MCF 10A (cell line): ENCODE measurements at regions of chr11 and their contacts with region 1.

Region 1: GRCh38 chr11:119101759-119102423 is at the start of gene DPAGT1:
- DNase-seq: peak; percentile 99
- H3K4me3 Mint-ChIP-seq: peak within 1 kb of the TSS; percentile 78
- H3K27ac Mint-ChIP-seq: peak within 1 kb of the TSS; percentile 99
- H3K4me1 Mint-ChIP-seq: peaks cover 16% of the 10 kb centered on the region
- H3K27me3 Mint-ChIP-seq: no peaks in the 10 kb centered on the region
- CTCF ChIP-seq: no peak
- total RNA-seq, gene DPAGT1: 55.6 and 58.8 TPM in 2 replicates

Region 2: GRCh38 chr11:118988280-118988679 is 113.6 kb before region 1 on chr11:
- CTCF ChIA-PET with region 1: no interaction called
- POLR2A ChIA-PET with region 1: no interaction called
- intact Hi-C with region 1: no loop called
- DNase-seq: peak; percentile 89
- H3K4me3 Mint-ChIP-seq: peak overlapping the region; percentile 60
- H3K27ac Mint-ChIP-seq: peak overlapping the region; percentile 53
- H3K4me1 Mint-ChIP-seq: peaks cover 11% of the 10 kb centered on the region
- H3K27me3 Mint-ChIP-seq: no peaks in the 10 kb centered on the region
- CTCF ChIP-seq: no peak

Region 3: DNA sequence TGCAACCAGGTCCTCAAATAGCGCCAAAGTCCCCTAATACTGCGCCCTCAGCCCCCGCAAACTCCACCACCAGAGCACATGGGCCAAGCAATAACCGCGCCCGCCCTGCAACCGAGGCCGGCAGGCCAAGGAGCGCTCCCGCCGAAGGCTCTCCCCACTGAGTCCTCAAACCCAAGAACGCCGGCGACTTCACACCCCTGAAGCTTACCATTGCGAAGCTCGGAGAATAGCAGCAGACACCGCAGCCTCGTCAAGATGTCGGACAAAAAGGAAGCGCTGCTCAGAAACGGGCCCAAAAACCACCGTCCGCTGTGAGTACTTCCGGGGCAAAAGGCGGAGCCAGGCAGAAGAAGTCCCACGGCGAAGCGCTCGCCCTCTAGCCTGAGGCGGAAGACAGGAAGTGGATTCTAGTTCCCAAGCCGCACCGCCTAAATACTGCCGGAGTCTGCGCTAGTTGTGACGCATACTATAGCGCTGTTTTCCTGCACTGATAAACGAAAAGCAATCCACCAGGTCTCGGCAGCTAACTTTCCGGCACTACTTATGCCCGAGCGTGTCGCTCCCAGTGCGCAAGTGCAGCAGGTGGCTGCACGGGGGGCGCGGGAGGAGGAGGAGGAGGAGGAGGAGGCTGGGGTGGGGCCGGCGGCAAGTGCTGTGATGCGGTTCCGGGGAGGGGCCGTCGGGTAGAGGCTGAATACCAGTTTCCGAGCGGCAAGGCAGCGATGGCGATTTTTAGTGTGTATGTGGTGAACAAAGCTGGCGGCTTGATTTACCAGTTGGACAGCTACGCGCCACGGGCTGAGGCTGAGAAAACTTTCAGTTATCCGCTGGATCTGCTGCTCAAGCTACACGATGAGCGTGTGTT is 83.6 kb before region 1 on chr11 and contains the starts of genes RPS25 and TRAPPC4:
- CTCF ChIA-PET with region 1: interaction called, 3 read pairs
- POLR2A ChIA-PET with region 1: interaction called, 22 read pairs
- intact Hi-C with region 1: loop called (anchors 2 kb)
- DNase-seq: peak; percentile 97
- H3K4me3 Mint-ChIP-seq: peak within 1 kb of the TSS; percentile 94
- H3K27ac Mint-ChIP-seq: peak within 1 kb of the TSS; percentile 98
- H3K4me1 Mint-ChIP-seq: peaks cover 22% of the 10 kb centered on the region
- H3K27me3 Mint-ChIP-seq: no peaks in the 10 kb centered on the region
- CTCF ChIP-seq: no peak
- total RNA-seq, gene RPS25: 1,252 and 1,255 TPM in 2 replicates
- total RNA-seq, gene TRAPPC4: 78.6 and 96.5 TPM in 2 replicates

Region 4: DNA sequence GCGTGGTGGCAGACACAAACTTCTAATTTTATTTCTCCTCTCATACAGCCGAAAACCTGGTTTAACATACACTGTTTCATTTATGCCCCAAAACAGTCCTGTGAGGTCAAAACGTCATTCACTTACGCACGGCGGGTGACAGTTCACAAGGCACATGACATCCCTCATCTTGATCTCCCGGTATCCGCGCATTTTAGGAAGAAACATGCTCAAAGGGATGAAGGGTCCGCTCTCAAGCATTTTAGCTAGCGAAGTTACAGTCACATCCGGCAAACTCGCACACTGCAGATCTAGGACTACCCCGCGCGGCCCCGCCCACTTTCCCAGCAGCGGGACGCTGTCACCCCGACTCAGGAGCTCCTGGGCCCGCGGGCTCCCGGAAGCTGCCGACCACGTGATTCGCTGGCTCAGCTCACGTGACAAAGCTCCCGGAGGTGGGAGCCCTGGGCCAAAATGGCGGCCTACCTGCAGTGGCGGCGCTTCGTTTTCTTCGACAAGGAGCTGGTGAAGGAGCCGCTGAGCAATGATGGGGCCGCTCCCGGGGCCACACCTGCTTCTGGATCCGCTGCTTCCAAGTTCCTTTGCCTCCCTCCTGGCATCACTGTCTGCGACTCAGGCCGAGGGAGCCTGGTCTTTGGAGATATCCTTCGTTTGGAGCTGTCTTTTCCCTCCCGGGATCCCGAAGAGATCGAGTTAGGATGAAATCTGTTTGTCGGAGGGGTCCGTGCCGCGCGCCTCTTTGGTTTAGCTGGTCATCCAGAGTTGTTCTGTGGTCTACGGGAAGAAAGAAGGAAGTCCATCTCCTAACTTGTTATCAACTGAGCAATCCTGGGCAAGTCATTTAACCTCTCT is 34.3 kb before region 1 on chr11 and contains the start of gene VPS11:
- CTCF ChIA-PET with region 1: no interaction called
- POLR2A ChIA-PET with region 1: interaction called, 35 read pairs
- intact Hi-C with region 1: loop called (anchors 2 kb)
- DNase-seq: peak; percentile 95
- H3K4me3 Mint-ChIP-seq: peak within 1 kb of the TSS; percentile 87
- H3K27ac Mint-ChIP-seq: peak within 1 kb of the TSS; percentile 76
- H3K4me1 Mint-ChIP-seq: peaks cover 7% of the 10 kb centered on the region
- H3K27me3 Mint-ChIP-seq: no peaks in the 10 kb centered on the region
- CTCF ChIP-seq: no peak
- total RNA-seq, gene VPS11: 16.2 and 21.8 TPM in 2 replicates

Region 5: DNA sequence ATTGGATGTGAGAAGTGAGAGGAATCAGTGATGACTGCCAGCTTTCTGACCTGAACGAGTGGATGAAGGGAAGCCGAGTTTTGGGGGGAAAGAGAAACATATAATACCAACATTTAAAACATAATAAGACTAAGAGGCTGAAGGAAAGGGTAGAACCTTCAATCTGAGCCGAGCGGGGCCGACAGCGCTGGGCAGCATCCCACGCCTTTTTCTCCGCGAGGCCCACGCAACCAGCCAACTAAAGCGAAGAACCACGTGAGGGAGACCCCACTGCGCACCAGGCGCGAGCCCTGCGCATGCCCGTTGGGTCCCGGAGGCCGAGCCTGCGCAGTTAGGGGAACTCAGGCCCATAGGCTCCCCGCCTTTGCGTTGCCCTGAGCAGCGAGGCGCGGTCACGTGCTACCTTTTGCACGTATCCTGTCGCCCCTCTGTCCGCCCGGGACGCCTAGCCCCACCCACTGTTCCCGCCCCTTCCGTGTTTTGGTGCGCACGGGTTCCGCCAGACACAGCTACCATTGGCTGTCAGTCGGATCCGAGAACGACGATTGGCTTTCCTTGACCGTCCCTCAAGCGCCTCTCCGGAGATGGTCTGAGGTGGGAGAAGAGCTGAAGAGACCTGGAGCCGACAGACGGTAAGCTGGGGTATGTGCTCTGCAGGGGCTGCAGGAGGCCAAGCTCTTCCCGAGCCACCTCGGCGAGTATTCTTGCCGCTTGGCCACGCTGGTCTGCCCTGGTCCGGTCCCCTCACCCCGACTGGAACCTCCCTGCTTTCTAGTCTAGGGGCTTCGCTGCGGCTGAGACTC is 19.3 kb after region 1 on chr11 and contains the start of gene HINFP:
- CTCF ChIA-PET with region 1: interaction called, 7 read pairs
- POLR2A ChIA-PET with region 1: interaction called, 149 read pairs
- intact Hi-C with region 1: loop called (anchors 2 kb)
- DNase-seq: peak; percentile 99
- H3K4me3 Mint-ChIP-seq: peak within 1 kb of the TSS; percentile 79
- H3K27ac Mint-ChIP-seq: peak within 1 kb of the TSS; percentile 85
- H3K4me1 Mint-ChIP-seq: peaks cover 25% of the 10 kb centered on the region
- H3K27me3 Mint-ChIP-seq: no peaks in the 10 kb centered on the region
- CTCF ChIP-seq: no peak
- total RNA-seq, gene HINFP: 23.4 and 26.2 TPM in 2 replicates

Region 6: DNA sequence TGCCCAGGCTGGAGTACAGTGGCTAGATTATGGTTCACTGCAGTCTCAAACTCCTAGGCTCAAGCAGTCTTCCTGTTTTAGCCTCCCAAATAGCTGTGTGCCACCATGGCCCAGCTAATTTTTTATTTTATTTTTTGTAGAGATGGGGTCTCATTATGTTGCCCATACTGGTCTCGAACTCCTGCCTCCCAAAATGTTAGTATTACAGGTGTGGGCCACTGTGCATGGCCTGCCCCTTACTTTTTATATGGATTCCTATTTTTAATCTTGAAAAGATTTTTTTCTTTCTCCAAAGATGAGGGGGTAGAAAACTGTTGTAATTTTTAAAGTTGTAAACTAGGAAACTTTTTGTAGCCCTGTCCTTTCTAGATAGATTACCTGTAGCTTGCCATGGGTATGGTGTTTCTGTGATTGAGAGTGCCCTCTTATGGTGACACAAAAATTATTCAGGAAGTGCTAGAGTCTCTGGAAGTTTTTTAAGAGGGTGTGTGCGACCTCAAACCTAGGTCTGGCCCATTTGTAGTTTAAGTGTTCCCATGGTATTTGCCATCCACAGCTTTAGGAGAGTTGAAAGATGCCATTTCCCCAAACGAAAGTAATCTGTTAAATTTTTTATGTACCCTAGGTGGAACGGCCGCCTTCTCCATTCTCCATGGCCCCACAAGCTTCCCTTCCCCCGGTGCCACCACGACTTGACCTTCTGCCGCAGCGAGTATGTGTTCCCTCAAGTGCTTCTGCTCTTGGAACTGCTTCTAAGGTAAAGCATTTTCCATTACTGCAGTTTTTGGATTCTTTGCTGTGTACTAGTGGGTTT is 182.7 kb after region 1 on chr11:
- CTCF ChIA-PET with region 1: no interaction called
- POLR2A ChIA-PET with region 1: interaction called, 3 read pairs
- intact Hi-C with region 1: loop called (anchors 10 kb)
- DNase-seq: peak; percentile 57
- H3K4me3 Mint-ChIP-seq: no peak overlapping the region
- H3K27ac Mint-ChIP-seq: no peak overlapping the region
- H3K4me1 Mint-ChIP-seq: peaks cover 4% of the 10 kb centered on the region
- H3K27me3 Mint-ChIP-seq: no peaks in the 10 kb centered on the region
- CTCF ChIP-seq: peak; percentile 55